Left colon (tissue), 2 donors: ENCODE measurements at regions of chr11 and their contacts with region 1.

Region 1: DNA sequence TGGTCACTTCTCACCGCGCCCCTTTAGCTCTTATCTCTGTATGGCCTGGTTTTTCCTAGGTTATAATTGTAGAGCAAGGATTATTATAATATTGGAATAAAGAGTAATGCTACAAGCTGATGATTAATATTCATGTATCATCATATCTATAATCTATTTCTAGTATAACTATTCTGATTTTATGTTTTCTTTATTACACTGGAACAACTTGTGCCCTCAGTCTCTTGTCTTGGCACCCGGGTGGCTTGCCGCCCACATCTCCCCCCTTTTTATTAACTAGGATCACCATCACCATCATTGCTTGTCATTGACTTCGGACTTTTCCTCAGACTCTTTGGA is 11.0 kb downstream of the OR52K1 start:
- DNase-seq: no peak
- ATAC-seq: no peak

Region 2: DNA sequence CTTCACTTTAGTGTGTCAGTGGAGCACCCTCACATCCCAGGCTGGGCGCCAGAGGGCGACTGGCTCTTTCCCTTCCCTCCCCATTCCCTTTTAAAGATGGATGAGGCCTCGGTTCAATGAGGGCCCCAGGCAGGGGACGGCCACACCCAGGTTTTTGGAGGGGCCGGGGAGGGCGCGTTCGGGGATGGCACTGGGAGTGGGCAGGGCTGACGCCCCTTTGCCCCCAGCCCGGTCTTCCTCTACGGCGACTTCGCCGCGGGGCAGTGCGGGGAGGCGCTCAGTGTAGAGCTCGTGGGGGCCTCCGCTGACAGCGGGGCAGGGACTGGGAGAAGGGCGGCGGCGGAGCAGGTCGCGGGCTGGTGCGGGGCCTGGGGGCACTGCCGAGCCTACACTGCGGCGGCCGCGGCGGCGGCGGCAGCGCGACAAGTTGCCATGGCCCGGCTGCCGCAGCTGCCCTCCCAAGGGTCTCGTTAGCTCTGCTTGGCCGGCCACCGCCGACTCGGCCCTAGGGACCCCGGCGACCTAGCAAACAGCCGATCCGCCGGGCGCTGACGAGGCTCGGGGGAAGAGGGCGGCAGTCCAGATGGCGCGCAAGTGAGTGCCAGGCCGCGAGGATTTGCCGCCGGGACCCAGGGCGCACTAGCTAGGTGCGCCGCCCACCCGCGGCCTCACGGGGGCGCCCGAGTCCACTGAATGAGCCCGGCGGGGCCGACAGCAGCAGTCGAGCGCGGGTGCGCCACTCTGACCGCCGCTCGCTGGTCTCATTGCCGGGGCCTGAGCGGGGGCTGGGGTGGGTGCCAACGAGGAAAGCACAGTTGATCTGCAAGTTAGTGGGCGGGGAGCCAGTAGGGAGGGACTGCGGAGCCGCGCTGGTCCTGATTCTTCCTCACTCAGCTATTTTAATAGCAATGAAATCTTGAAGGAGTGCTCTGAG is 306.1 kb before region 1 on chr11:
- intact Hi-C with region 1: loop called in 1 of 2 experiments (anchors 2 kb)
- DNase-seq: peak; percentile 85 to 88
- ATAC-seq: peak; percentile 96